GM13977 (cell line): ENCODE measurements at regions of chr22 and their contacts with region 1.

Region 1: DNA sequence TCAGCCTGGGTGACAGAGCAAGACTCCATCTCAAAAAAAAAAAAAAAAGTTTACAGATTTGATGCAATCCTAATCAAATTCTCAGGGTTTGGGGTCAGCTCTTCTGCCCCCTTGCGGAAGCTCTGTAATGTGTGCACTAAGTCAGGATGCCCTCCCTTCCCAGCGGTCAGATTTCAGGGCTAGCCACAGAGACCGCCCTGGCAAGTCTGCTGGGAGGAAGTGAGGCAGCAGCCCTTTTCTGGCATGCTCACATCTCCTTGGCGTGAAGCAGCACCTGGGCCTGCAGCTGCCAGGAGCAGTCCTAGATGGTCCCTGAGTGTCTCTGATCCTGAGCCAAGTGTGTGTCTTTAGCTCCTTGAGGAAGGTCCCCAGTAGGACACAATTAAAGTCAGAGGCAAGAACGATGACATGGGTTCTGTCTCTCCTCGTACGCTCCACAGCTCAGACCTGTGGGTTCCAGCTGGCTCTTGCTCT is 10.9 kb upstream of the APOBEC3C start:
- DNase-seq: peak; percentile 84
- CTCF ChIP-seq: peak; percentile 72

Region 2: GRCh38 chr22:38214256-38215056 is 788.7 kb before region 1 on chr22:
- in situ Hi-C with region 1: no loop called
- DNase-seq: peak; percentile 71
- CTCF ChIP-seq: no peak

Region 3: DNA sequence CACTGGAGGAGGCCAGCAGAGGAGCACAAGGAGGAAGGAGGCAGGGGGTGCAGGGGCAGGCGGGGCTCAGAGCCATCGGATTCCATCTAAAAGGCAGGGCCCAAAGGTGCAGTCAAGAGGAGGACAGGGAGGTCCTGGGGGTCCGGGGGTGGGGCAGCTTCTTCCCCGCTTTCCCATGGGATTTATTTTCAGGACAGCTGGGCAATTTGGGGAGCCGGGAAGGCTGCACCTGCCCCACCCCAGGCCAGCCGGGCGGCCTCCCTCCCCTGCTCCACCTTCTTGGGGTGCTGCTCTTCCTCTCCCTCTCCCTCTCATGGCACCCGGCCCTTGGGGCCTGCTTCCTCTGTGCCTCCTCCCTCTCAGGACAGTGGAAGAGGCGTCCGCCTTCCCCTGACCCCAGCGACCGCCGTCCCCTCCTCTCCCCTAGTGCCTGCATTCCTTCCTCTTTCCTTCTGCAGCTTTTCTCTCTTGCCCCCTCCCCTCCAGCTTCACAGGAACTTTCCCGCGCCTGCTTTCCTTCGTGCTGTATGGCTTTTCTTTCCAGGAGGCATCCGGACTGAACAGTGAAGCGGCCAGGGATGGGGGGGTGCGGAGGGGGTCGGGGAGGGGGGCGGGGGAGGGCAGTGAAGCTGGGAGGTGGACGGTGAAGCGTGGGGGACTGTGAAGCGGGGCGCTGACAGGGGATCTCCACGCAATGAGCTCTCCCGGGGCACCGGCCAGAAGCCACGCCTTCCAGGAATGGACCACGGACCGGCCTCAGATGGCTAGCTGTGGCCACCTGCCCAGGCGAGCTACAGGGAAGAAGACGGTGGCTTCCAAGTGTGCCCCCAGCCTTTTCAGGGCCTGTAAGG is 120.8 kb after region 1 on chr22:
- in situ Hi-C with region 1: loop called (anchors 10 kb)
- DNase-seq: peak; percentile 12
- CTCF ChIP-seq: no peak

Region 4: DNA sequence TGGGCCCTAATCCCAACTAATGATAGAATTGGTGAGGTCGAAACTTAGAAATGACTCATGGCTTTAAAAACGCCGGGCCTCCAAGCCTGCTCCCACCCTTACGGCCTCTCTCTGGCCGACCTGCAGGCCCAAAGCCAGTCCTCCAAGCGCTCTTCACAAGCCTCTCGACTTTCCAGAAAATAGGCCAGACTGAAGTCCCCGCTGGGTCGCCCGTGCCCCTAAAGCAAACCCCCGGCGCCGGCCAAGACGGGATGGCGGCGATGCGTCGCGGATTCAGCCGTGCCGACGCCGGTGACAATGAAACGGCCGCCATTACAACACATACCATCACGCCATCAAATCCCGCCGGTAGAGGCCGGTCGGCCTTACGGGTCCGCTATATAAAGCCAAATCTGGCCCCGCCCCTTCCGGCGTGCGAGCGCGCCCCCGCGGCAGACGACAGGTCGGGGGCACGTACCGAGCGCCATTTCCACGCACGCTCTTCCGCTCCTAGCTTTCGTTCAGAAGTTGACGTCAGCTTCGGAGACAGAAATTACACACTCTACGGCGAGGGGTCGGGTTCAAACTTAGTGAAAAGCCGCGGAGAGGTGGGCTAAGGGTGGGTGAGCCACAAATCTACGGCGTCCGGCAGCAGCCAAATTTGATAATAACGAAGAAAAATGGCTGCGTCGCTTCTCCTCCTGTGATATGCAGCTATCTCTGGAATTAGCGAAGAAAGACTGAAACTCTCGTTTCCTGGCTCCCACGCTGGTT is 316.2 kb after region 1 on chr22 and contains the start of gene RPL3:
- in situ Hi-C with region 1: loop called (anchors 25 kb)
- DNase-seq: peak; percentile 96
- CTCF ChIP-seq: peak; percentile 10